Thyroid gland (tissue), 4 donors: ENCODE measurements at regions of chr3 and their contacts with region 1.

Region 1: DNA sequence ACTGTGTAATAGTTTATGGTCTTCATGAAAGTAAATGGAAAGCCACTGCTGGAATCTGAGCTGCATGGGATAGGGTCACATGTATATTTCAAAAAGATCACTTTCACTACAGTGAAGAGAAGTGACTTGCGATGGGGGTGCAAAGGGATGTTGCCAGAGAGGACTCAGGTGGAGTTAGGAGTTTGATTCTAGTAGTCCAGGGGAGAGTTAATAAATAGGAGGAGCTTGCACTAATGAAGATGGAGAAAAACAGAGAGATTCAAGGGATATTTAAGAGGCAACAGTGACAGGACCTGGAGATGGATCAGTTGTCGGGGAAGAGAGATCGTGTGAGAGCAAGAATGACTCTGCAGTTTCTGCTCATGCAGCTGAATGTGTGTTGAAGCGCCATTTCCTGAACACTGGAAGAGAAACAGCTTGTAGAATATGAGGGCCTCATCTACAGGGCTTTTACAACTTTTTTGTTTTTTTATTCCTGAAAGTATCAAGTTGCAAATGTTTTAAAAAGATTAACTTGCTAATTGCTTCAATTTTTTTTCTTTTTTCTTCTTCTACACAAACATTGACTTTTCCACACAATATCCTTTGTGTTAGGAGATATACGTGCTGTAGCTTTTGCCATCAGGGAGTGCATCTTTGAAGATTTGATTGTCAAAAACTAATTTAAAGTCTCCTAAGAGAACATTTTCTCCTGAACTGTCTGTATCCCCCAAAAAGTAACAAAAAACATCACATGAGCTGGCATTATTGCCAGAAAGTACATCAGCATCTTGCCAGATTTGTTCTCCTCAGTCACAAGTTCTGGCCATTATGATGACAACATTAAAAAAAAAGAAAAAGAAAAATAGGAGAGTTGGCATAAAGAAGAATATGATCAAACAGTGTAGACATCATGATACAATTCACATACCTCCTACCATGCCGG is 37.5 kb downstream of the SETMAR start:
- DNase-seq: peak in 1 of 2 donors; percentile 16
- H3K4me3 ChIP-seq: no peak overlapping the region
- H3K27ac ChIP-seq: peak overlapping the region in 1 of 3 donors; percentile 18
- H3K4me1 ChIP-seq: peaks cover 0 to 10% of the 10 kb centered on the region in 2 donors
- H3K27me3 ChIP-seq: no peaks in the 10 kb centered on the region
- CTCF ChIP-seq: no peak
- POLR2A ChIP-seq: no peak

Region 2: GRCh38 chr3:4493014-4493940 is 152.6 kb after region 1 on chr3 and contains the start of gene ITPR1:
- intact Hi-C with region 1: loop called (anchors 10 kb)
- DNase-seq: peak; percentile 99
- H3K4me3 ChIP-seq: peak within 1 kb of the TSS; percentile 33 to 74 (median 57)
- H3K27ac ChIP-seq: peak within 1 kb of the TSS; percentile 72 to 87 (median 84)
- H3K4me1 ChIP-seq: peaks cover 12 to 17% of the 10 kb centered on the region in 2 donors
- H3K27me3 ChIP-seq: no peaks in the 10 kb centered on the region
- CTCF ChIP-seq: peak in 1 of 6 experiments; percentile 22
- POLR2A ChIP-seq: peak; percentile 96 to 100
- total RNA-seq, gene ITPR1: 210 to 261 (median 232) TPM

Region 3: GRCh38 chr3:5057857-5058324 is 717.2 kb after region 1 on chr3:
- intact Hi-C with region 1: loop called (anchors 10 kb)
- DNase-seq: peak; percentile 83 to 85
- H3K4me3 ChIP-seq: no peak overlapping the region
- H3K27ac ChIP-seq: no peak overlapping the region
- H3K4me1 ChIP-seq: no peaks in the 10 kb centered on the region
- H3K27me3 ChIP-seq: no peaks in the 10 kb centered on the region
- CTCF ChIP-seq: peak; percentile 21 to 89 (median 82)
- POLR2A ChIP-seq: no peak